Right ventricle myocardium inferior (tissue), 1 donor: ENCODE measurements at regions of chr7 and their contacts with region 1.

Region 1: DNA sequence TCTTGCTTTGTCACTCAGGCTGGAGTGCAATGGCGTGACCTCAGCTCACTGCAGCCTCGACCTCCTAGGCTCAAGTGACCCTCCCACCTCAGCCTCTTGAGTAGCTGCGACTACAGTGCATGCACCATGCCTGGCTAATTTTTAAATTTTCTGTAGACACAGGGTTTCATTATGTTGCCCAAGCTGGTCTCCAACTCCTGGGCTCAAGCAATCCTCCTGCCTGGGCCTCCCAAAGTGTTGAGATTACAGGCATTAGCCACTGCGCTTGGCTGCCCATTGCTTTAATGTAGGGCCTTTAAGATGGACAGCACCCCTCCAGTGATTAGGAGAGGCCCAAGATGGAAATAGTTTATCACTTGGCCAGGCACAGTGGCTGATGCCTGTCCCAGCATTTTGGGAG is 39.4 kb downstream of the NIPSNAP2 start:
- DNase-seq: no peak
- ATAC-seq: no peak

Region 2: GRCh38 chr7:56074371-56074791 is 70.6 kb after region 1 on chr7:
- intact Hi-C with region 1: loop called (anchors 5 kb)
- DNase-seq: peak; percentile 93
- ATAC-seq: peak; percentile 91